Esophagus muscularis mucosa (tissue), 4 donors: ENCODE measurements at regions of chr6 and their contacts with region 1.

Region 1: DNA sequence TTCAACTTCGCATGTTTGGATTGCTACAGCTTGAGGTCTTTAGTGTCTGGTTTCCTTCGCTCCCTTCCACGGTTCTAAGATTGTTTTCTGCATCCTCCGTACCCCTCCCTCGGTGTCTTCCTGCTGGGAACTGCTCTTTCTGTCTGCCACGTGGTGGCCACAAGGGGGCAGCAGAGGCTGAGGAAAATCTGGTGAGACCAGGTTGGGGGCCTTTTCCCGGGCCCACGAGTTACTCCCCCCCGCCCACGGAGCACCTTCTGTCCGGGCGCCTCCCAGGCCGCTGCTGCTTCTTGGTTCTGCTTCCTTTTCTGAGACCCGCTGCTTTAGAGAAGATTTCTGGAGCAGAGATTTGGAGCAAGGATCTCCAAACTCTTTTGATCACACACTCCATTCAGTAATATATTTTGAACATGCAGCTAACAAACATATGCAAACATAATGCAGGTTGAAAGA is 21.1 kb upstream of the NOTCH4 start:
- DNase-seq: peak; percentile 95
- H3K4me3 ChIP-seq: peak overlapping the region; percentile 29 to 38 (median 35)
- H3K27ac ChIP-seq: peak overlapping the region; percentile 62 to 79 (median 74)
- H3K4me1 ChIP-seq: peaks cover 7 to 21% (median 19%) of the 10 kb centered on the region in 4 donors
- H3K27me3 ChIP-seq: peaks cover 0 to 4% (median 0%) of the 10 kb centered on the region in 4 donors
- CTCF ChIP-seq: peak; percentile 87 to 89 (median 88)
- EP300 ChIP-seq: no peak
- POLR2A ChIP-seq: no peak

Region 2: GRCh38 chr6:32195652-32195901 is 49.4 kb before region 1 on chr6:
- intact Hi-C with region 1: loop called (anchors 5 kb)
- DNase-seq: peak; percentile 100
- H3K4me3 ChIP-seq: peak overlapping the region; percentile 65 to 95 (median 78)
- H3K27ac ChIP-seq: peak overlapping the region; percentile 94 to 100 (median 96)
- H3K4me1 ChIP-seq: peaks cover 44 to 55% (median 49%) of the 10 kb centered on the region in 4 donors
- H3K27me3 ChIP-seq: peaks cover 0 to 1% (median 0%) of the 10 kb centered on the region in 4 donors
- CTCF ChIP-seq: peak; percentile 17 to 54 (median 53)
- EP300 ChIP-seq: no peak
- POLR2A ChIP-seq: no peak